K562 (cell line): ENCODE measurements at regions of chr9 and their contacts with region 1.

Region 1: DNA sequence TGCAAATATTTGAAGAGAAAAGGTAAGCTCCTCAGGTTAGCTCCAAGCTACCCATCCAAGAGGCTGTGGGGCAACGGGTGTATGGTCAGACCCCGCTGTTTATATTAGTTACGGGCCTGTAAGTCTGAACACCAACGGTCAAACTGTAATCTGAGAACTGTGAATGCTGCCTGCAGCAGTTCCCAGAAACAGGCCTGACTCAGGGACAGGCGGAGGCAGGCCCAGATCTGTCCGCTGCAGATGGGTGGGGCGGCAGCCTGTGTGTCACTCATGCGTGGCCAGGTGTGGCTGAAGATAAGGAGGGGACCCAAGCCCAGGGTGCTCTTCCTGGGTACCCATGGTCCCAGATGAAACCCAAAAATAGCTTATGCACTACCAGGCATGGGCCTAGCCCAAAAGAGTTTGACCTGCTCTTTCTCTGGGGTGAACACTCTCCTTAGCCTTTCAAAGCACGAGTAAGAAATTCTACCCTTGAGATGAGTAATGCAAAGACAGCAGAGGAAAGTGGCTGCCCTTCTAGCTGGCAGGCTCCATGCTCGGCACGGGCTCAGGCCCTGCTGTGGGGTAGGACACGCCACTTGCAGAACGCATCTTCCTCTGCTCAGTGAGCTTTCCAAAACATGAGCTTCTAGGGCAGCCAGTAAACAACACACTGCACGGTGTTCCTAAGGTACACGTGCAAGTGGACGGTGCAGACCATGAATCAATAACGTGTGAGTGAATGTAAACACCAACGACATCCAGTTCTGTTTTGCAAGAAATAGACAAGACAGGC is 9.1 kb downstream of the UBAC1 start:
- DNase-seq: peak; percentile 94 to 99 (median 95)
- ATAC-seq: peak; percentile 84
- H3K4me3 ChIP-seq: no peak overlapping the region
- H3K27ac ChIP-seq: peak overlapping the region; percentile 91
- H3K4me1 ChIP-seq: peaks cover 73 to 88% of the 10 kb centered on the region in 2 experiments
- H3K27me3 ChIP-seq: no peaks in the 10 kb centered on the region
- CTCF ChIP-seq: no peak
- EP300 ChIP-seq: peak; percentile 99
- POLR2A ChIP-seq: peak; percentile 64
- RAD21 ChIP-seq: peak in 1 of 2 experiments; percentile 19; a peak in 1 of 4 replicates

Region 2: GRCh38 chr9:135907431-135908092 is 44.5 kb before region 1 on chr9 and contains the start of gene CAMSAP1:
- CTCF ChIA-PET with region 1: no interaction called
- POLR2A ChIA-PET with region 1: no interaction called
- in situ Hi-C with region 1: no loop called
- intact Hi-C with region 1: loop called (anchors 5 kb)
- DNase-seq: peak; percentile 96 to 97 (median 96)
- ATAC-seq: peak; percentile 94
- H3K4me3 ChIP-seq: peak within 1 kb of the TSS; percentile 63
- H3K27ac ChIP-seq: peak within 1 kb of the TSS; percentile 80
- H3K4me1 ChIP-seq: peaks cover 42 to 56% of the 10 kb centered on the region in 2 experiments
- H3K27me3 ChIP-seq: no peaks in the 10 kb centered on the region
- CTCF ChIP-seq: no peak
- EP300 ChIP-seq: no peak
- POLR2A ChIP-seq: peak; percentile 71
- RAD21 ChIP-seq: no peak
- polyA plus RNA-seq, gene CAMSAP1: 1.5 to 1.6 TPM

Region 3: DNA sequence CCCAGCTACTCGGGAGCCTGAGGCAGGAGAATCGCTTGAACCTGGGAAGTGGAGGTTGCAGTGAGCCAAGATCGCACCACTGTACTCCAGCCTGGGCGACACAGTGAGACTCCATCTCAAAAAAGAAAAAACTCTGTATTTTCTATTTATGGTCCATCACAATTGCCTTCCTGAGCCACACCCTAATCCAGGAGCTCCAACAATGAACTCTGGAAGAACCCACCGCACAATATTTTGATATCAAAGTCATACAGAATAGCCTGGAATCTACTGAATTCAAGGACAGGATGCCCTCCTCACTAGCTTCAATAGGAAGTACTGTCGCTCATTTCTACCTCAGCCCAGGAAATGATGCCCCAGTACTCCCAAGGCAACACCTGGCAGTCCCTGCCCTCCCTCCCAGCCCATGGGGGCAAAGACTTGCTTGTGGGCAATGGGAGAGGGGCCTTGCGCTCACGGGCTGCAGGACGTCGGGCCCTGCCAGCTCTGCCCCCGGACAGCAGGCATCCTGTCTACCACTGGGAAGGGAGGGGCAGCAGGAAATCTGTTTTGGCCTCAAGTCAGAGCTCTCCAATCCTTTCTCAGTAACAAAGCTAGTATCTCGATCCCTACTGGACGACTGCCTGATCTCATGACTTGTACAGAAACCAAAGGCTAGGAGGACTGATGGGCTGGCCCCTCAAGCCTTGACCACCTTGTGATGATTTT is 10.6 kb before region 1 on chr9:
- CTCF ChIA-PET with region 1: no interaction called
- POLR2A ChIA-PET with region 1: interaction called, 16 read pairs
- in situ Hi-C with region 1: no loop called
- intact Hi-C with region 1: no loop called
- DNase-seq: no peak
- ATAC-seq: no peak
- H3K4me3 ChIP-seq: no peak overlapping the region
- H3K27ac ChIP-seq: no peak overlapping the region
- H3K4me1 ChIP-seq: peaks cover 0 to 34% of the 10 kb centered on the region in 2 experiments; a peak in 3 of 5 replicates
- H3K27me3 ChIP-seq: no peaks in the 10 kb centered on the region
- CTCF ChIP-seq: no peak
- EP300 ChIP-seq: no peak
- POLR2A ChIP-seq: no peak
- RAD21 ChIP-seq: no peak